CD14-positive monocyte (primary cell): ENCODE measurements at regions of chr18 and their contacts with region 1.

Region 1: GRCh38 chr18:24530630-24531111 is 70.2 kb downstream of the HRH4 start:
- DNase-seq: peak in 1 of 3 donors; percentile 6
- H3K4me3 ChIP-seq: no peak overlapping the region
- H3K4me3 Mint-ChIP-seq: no peak overlapping the region
- H3K27ac ChIP-seq: no peak overlapping the region
- H3K27ac Mint-ChIP-seq: no peak overlapping the region
- H3K4me1 ChIP-seq: no peaks in the 10 kb centered on the region
- H3K4me1 Mint-ChIP-seq: peaks cover 5% of the 10 kb centered on the region
- H3K27me3 ChIP-seq: no peaks in the 10 kb centered on the region
- H3K27me3 Mint-ChIP-seq: peaks cover 0 to 6% (median 6%) of the 10 kb centered on the region in 3 donors
- CTCF ChIP-seq: no peak

Region 2: GRCh38 chr18:24475926-24476589 is 54.6 kb before region 1 on chr18:
- intact Hi-C with region 1: loop called in 1 of 2 experiments (anchors 10 kb)
- DNase-seq: no peak
- H3K4me3 ChIP-seq: no peak overlapping the region
- H3K4me3 Mint-ChIP-seq: no peak overlapping the region
- H3K27ac ChIP-seq: no peak overlapping the region
- H3K27ac Mint-ChIP-seq: no peak overlapping the region
- H3K4me1 ChIP-seq: peaks cover 5 to 6% of the 10 kb centered on the region in 2 donors
- H3K4me1 Mint-ChIP-seq: peaks cover 23% of the 10 kb centered on the region
- H3K27me3 ChIP-seq: no peaks in the 10 kb centered on the region
- H3K27me3 Mint-ChIP-seq: peaks cover 0 to under 1% (median 0%) of the 10 kb centered on the region in 3 donors
- CTCF ChIP-seq: no peak

Region 3: DNA sequence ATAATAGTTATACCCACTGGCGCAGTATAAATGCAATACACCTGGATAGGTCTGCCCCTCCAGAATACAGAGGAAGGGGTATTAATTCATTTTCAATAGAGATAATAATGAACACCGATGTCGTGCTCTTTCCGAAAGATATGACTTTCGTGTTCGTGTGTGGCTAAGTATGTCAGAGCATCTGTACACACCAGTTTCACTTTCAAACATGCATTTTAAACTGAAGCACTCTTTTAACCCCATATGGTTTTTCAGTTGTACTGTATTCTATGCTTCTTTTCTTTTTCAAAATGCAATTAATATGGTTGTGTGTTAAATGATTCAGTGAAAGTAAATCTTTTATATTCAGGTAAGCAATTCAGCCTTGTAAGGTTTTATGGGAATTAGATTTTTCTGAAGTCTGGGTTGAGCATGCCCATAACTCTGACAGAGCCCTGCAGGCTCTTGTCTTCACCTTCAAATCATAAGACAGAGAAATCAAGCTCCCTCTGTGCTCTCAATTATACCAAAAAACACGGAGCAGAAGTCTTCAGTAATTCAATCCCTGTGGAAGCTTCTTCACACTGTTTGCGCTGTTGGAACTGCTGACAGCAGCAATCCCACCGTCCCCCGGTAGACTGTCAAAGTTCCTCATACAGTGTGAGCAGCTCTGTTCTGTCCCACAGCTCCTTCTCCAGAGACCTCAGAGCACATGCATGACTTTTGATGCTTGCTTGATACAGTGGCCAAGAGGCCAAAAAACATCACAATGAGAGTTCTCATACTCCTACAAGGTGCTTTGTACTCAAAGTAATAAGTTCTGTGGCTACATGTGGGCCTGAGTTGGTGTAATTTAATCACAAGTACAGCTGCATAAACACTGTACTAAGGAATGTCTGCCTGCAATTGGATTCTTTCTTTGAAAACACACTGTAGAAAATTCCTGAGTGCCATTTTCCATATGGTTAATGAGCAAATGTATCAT is 634.5 kb after region 1 on chr18:
- intact Hi-C with region 1: no loop called
- DNase-seq: peak; percentile 2 to 7 (median 5)
- H3K4me3 ChIP-seq: peak overlapping the region; percentile 41 to 73 (median 70)
- H3K4me3 Mint-ChIP-seq: peak overlapping the region; percentile 77 to 96
- H3K27ac ChIP-seq: peak overlapping the region in 1 of 2 donors; percentile 6
- H3K27ac Mint-ChIP-seq: peak overlapping the region in 1 of 7 donors; percentile 57
- H3K4me1 ChIP-seq: peaks cover 5 to 13% of the 10 kb centered on the region in 2 donors
- H3K4me1 Mint-ChIP-seq: peaks cover 16% of the 10 kb centered on the region
- H3K27me3 ChIP-seq: no peaks in the 10 kb centered on the region
- H3K27me3 Mint-ChIP-seq: peaks cover 0 to 2% (median 0%) of the 10 kb centered on the region in 3 donors
- CTCF ChIP-seq: no peak